ENCODE measurements at regions of chr18 and their contacts with region 1.

Region 1: GRCh38 chr18:51039138-51040112 is 9.4 kb downstream of the SMAD4 start:
- DNase-seq: peak; percentile 29
- CTCF ChIP-seq: no peak

Region 2: DNA sequence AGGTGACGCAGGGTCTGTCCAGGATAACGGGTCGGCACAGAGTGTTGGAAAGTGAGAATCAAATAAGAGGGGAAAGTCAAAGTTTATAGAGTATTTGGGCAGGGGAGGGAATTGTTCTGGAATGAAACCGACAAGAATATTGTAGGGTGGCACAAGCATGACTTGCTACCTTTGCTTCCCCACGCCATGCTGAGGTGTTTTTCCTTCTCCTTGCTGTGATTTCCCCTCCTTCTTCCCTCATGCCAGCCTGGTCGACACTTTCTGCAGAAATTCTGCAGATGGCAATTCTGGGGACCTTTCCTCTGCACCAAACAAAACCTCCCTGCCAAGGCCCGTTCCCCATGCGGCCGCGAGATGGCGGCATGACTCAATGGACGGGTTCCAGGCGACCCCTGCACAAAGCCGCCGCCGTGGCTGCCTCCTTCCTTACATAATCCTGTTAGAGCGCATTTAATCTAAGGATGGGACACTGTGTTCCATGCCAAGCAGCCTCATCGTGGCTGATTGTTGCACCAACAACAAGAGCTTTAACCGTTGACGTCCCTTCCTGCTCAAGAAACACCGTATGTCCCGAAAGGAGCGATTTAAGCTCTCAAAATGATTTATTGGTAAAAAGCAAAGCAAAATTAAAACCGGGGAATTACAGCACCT is 219.6 kb before region 1 on chr18 and contains the start of gene MRO:
- in situ Hi-C with region 1: loop called (anchors 10 kb)
- DNase-seq: peak; percentile 89
- CTCF ChIP-seq: peak; percentile 89

Region 3: GRCh38 chr18:51639541-51639940 is 600.1 kb after region 1 on chr18:
- in situ Hi-C with region 1: no loop called
- DNase-seq: no peak
- CTCF ChIP-seq: no peak

Measured in GM13976 (cell line).